Right ventricle myocardium superior (tissue), 1 donor: ENCODE measurements at regions of chr5 and their contacts with region 1.

Region 1: DNA sequence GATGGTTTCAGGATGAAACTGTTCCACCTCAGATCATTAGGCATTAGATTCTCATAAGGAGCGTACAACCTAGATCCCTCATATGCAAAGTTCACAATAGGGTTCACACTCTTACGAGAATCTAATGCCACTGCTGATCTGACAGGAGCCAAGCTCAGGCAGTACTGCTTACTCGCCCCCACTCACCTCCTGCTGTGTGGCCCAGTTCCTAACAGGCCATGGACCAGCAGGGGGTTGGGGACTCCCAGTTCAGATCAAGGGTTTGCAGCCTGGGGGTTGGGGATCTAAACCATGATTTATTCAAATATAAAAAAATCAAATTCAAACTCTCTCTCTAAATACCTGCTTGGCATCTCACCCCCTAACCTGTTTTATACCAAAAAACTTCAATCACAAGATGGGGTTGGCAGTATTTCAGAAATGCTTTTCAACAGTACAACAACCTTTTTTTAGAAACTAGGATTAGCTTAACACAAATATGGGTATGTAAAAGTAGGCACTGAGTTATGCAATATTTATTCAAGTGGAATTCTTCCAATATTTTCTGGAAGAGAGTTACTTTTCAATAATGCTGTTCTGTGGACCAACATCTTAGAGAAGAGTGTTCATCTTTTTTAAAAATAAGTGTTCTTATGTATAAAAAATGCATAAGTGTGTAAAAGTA is 30.1 kb upstream of the SLC12A2 start:
- DNase-seq: no peak
- ATAC-seq: peak; percentile 63

Region 2: DNA sequence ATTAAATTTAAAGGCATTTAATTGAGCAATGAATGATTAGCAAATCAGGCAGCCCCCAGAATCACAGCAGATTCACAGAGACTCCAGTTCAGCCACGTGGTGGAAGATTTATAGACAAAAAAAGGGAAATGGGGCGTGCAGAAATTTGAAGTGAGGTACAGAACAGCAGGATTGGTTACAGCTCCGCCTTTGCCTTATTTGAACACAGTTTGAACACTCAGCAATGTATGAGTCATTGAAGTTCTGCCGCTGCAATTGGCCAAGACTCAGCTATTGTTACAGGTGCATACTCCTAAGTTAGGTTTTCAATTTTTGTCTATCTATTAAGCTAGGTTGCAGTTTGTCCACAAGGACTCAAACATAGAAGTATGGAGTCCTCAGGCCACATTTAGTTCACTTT is 127.5 kb before region 1 on chr5:
- intact Hi-C with region 1: no loop called
- DNase-seq: no peak
- ATAC-seq: no peak

Region 3: GRCh38 chr5:127960270-127960691 is 93.1 kb before region 1 on chr5:
- intact Hi-C with region 1: loop called (anchors 10 kb)
- DNase-seq: no peak
- ATAC-seq: peak; percentile 14

Region 4: GRCh38 chr5:128596071-128596470 is 542.6 kb after region 1 on chr5:
- intact Hi-C with region 1: no loop called
- DNase-seq: no peak
- ATAC-seq: no peak